ENCODE measurements at regions of chr2 and their contacts with region 1.

Region 1: GRCh38 chr2:33134086-33134771 is 187.5 kb downstream of the LTBP1 start:
- DNase-seq: peak; percentile 67
- ATAC-seq: peak; percentile 78

Region 2: GRCh38 chr2:33091541-33092123 is 42.6 kb before region 1 on chr2:
- intact Hi-C with region 1: loop called (anchors 5 kb)
- DNase-seq: no peak
- ATAC-seq: peak; percentile 87

Region 3: GRCh38 chr2:33210626-33211025 is 76.4 kb after region 1 on chr2:
- intact Hi-C with region 1: loop called (anchors 5 kb)
- DNase-seq: no peak
- ATAC-seq: peak; percentile 58